Activated T-helper 1 cell treated with anti-CD3 and anti-CD28 coated beads, Interleukin-12 subunit alpha, Interleukin-12 subunit beta, Interleukin-2, Interleukin-4 antibody, amounts not matched to agents 30 ng/mL and 10 ng/mL and 1 ng/mL, durations not matched to agents 14 hours and 24 hours and 36 hours (primary cell): ENCODE measurements at regions of chr17 and their contacts with region 1.

Region 1: GRCh38 chr17:40340880-40341807 is 23.4 kb downstream of the GJD3 start:
- DNase-seq: peak; percentile 79
- H3K4me3 Mint-ChIP-seq: peak overlapping the region; percentile 77
- H3K27ac Mint-ChIP-seq: peak overlapping the region; percentile 86
- H3K4me1 Mint-ChIP-seq: peaks cover 69% of the 10 kb centered on the region
- H3K27me3 Mint-ChIP-seq: no peaks in the 10 kb centered on the region

Region 2: GRCh38 chr17:40251576-40251975 is 89.6 kb before region 1 on chr17:
- intact Hi-C with region 1: no loop called
- DNase-seq: no peak
- H3K4me3 Mint-ChIP-seq: no peak overlapping the region
- H3K27ac Mint-ChIP-seq: no peak overlapping the region
- H3K4me1 Mint-ChIP-seq: peaks cover 4% of the 10 kb centered on the region
- H3K27me3 Mint-ChIP-seq: no peaks in the 10 kb centered on the region

Region 3: DNA sequence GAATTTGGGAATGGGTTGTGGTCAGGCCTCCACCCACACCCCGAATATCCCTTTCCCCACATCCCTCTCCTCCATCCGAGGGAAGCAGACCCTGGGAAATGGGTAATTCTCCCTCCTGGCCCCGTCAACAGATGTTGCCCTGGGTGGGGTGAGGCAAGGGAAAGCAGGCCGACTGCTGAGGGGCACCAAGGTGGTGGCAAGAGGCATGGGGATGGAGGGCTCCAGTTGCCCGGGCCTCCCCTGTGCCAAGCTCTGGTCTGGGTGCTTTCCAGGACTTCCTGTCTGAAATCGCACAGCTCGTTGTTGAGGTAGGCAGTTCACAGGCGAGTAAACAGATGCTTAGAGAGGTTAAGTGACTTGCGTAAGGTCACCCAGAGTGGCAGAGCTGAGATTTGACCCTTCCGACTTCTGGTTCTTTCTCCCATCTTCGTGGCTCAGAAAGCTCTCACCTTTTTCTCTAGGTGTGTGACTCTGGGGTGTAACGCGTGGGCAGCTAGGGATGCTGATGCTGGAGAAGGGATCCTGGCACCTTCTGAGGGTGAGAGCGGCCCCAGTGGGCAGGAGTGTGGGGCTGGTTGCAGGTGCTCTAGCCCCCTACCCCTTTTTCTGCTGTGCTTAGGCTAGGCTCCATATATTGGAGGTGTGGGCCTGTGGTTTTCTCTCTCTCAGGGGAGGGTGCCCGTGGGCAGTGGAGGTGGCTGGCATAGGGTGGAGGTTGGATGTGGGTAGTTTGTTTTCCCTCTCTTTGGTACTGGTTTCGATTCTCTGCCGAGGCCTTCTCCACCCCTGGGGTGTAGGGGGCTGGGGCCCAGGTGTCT is 14.9 kb before region 1 on chr17:
- intact Hi-C with region 1: loop called (anchors 1 kb)
- DNase-seq: peak; percentile 41
- H3K4me3 Mint-ChIP-seq: peak overlapping the region; percentile 73
- H3K27ac Mint-ChIP-seq: peak overlapping the region; percentile 95
- H3K4me1 Mint-ChIP-seq: peaks cover 92% of the 10 kb centered on the region
- H3K27me3 Mint-ChIP-seq: no peaks in the 10 kb centered on the region